Mammary epithelial cell (primary cell): ENCODE measurements at regions of chr22 and their contacts with region 1.

Region 1: GRCh38 chr22:46035742-46036557 is 59.0 kb upstream of the WNT7B start:
- DNase-seq: peak; percentile 97
- H3K4me3 ChIP-seq: peak overlapping the region; percentile 74 to 89 (median 87)
- H3K27ac ChIP-seq: peak overlapping the region; percentile 80
- H3K4me1 ChIP-seq: peaks cover 19% of the 10 kb centered on the region
- H3K27me3 ChIP-seq: no peaks in the 10 kb centered on the region
- CTCF ChIP-seq: no peak

Region 2: DNA sequence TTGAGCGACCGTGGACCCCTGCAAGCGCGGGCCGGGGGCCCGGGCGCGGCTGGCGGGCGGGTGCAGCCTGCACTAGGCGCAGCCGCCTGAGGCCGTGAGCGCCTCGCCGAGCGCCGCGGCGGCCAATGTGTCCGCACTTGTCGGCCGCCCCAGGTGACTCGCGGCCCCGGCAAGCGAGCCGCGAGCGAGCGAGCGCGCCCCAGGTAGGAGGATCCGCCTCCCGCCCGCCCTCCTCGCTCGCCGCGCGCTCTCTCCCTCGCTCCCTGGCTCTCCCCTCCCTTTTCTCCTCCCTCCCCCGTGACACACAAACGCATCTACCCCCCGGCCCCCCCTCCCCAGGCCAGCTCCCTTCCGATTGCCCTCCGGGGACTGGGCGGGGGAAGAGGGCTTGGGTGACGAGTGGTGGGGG is 58.9 kb before region 1 on chr22 and contains the start of gene WNT7B:
- CTCF ChIA-PET with region 1: no interaction called
- dilution Hi-C with region 1: no loop called
- in situ Hi-C with region 1: no loop called
- intact Hi-C with region 1: no loop called
- DNase-seq: peak; percentile 78
- H3K4me3 ChIP-seq: peak within 1 kb of the TSS in 2 of 3 experiments; percentile 36 to 43
- H3K27ac ChIP-seq: no peak within 1 kb of the TSS
- H3K4me1 ChIP-seq: peaks cover 25% of the 10 kb centered on the region
- H3K27me3 ChIP-seq: peaks cover 11% of the 10 kb centered on the region
- CTCF ChIP-seq: no peak
- total RNA-seq, gene WNT7B: 0.31 to 0.50 TPM

Region 3: GRCh38 chr22:46057762-46058420 is 21.9 kb after region 1 on chr22:
- CTCF ChIA-PET with region 1: no interaction called
- dilution Hi-C with region 1: no loop called
- in situ Hi-C with region 1: no loop called
- intact Hi-C with region 1: loop called (anchors 1 kb)
- DNase-seq: peak; percentile 86
- H3K4me3 ChIP-seq: peak overlapping the region; percentile 4 to 72 (median 59)
- H3K27ac ChIP-seq: peak overlapping the region; percentile 87
- H3K4me1 ChIP-seq: peaks cover 66% of the 10 kb centered on the region
- H3K27me3 ChIP-seq: no peaks in the 10 kb centered on the region
- CTCF ChIP-seq: no peak

Region 4: DNA sequence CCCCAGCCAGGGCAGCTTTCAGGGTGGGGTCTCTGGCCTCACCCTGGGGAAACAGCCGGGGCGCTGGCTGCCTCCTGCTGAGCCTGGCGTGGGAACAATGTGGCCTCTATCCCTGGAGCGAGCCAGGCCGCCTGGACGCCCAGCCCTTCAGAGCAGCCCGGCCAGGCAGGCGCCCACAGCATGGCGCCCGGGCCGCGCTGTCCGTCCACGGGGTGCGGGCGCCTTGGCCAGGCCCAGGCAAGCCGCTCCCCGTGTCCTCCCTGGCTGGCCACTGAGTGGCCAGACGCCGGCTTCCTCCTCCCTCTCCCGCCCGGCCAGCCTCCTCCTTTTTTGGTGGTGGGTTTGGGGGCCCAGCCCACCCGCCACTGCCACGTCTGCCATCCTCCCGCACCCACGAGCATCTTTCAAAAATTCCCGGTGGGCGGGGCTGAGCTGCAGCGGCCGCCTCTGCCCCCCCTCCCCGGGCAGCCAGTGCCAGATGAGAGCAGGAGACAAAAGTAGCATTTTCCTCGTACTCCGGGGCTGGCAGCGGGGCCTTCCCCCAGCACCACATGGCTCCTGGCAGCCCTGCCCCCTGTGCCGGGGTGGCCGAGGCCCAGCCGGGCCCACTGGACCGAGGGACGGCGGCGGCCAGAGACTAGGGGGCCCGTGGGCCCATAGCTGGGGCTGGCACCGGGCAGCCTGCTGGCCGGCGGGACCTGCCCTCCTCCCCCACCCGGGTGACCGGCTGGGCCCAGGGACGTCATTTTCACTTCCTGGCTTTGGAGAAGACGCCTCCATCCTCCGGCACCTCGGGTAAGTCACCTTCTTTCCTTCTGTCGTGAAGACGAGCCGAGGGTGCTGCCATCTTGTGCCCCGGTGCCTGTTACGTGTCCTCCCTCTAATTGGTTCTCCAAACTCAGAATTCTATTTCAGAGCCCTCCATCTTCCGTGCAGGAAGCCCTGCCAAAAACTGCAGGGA is 44.2 kb after region 1 on chr22:
- CTCF ChIA-PET with region 1: no interaction called
- dilution Hi-C with region 1: no loop called
- in situ Hi-C with region 1: no loop called
- intact Hi-C with region 1: loop called (anchors 1 kb)
- DNase-seq: peak; percentile 95
- H3K4me3 ChIP-seq: peak overlapping the region; percentile 89 to 95 (median 93)
- H3K27ac ChIP-seq: peak overlapping the region; percentile 94
- H3K4me1 ChIP-seq: peaks cover 61% of the 10 kb centered on the region
- H3K27me3 ChIP-seq: no peaks in the 10 kb centered on the region
- CTCF ChIP-seq: no peak

Region 5: DNA sequence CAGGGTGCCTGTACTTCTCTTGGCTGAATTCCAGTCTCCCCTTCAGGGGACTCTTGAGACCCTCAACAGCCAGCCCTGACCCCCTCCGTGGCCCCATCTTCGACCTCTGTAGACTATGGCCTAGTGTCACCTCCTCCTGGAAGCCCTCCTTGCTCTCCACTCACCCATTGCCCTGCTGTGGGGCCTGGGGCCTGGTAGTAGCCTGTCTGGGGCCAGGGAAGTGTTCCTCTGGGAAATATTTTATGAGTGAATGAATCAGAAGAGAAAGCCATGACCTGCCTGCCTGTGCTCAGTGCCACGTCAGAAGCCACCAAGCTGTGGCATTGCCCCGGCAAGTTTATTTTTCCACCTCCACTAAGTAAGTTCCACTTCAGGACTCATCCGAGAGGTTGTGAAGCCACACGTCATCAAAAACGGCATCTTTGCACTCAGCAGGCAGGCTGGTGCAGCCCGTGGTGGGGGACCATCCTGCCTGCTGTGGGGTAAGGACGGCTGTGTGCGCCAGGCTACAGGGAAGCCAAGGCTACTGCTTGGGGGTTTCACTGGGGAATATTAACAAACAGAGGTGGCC is 54.8 kb after region 1 on chr22:
- CTCF ChIA-PET with region 1: no interaction called
- dilution Hi-C with region 1: no loop called
- in situ Hi-C with region 1: no loop called
- intact Hi-C with region 1: no loop called
- DNase-seq: peak; percentile 86
- H3K4me3 ChIP-seq: no peak overlapping the region
- H3K27ac ChIP-seq: peak overlapping the region; percentile 79
- H3K4me1 ChIP-seq: peaks cover 83% of the 10 kb centered on the region
- H3K27me3 ChIP-seq: no peaks in the 10 kb centered on the region
- CTCF ChIP-seq: no peak

Region 6: GRCh38 chr22:46116491-46116958 is 80.6 kb after region 1 on chr22:
- CTCF ChIA-PET with region 1: interaction called, 19 read pairs
- dilution Hi-C with region 1: no loop called
- in situ Hi-C with region 1: no loop called
- intact Hi-C with region 1: loop called (anchors 2 kb)
- DNase-seq: peak; percentile 63
- H3K4me3 ChIP-seq: no peak overlapping the region
- H3K27ac ChIP-seq: no peak overlapping the region
- H3K4me1 ChIP-seq: peaks cover 30% of the 10 kb centered on the region
- H3K27me3 ChIP-seq: no peaks in the 10 kb centered on the region
- CTCF ChIP-seq: peak; percentile 29 to 83

Region 7: DNA sequence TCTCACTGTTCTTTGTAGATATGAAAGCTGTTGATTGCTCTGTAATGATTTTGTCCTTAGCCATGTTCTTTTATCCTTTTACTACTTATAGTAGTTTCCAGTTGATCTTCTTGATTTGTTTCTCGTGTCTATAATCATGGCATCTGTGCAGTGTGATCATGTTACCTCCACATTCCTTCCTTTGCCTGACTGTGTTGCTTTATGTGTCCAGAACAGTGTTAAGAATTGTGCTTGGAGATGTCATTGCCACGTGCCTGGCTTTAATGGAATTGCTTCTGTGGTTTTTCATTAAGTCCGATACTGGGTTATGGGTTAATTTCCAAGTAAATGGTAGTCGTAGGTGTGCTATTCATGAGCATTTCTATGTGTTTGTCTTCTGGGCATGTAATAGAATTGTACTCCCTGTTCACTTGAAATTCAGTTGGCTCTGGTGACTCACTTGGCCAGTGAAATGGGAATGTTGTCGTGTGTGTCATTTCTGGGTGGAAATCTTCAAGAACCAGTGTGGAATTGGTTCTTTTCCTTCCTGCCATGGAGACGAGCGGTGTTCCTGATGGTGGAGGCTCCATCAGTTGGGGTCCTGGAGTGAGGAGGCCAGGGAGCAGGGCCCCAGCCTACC is 267.5 kb after region 1 on chr22:
- CTCF ChIA-PET with region 1: no interaction called
- dilution Hi-C with region 1: no loop called
- in situ Hi-C with region 1: no loop called
- intact Hi-C with region 1: no loop called
- DNase-seq: peak; percentile 8
- H3K4me3 ChIP-seq: no peak overlapping the region
- H3K27ac ChIP-seq: no peak overlapping the region
- H3K4me1 ChIP-seq: peaks cover 15% of the 10 kb centered on the region
- H3K27me3 ChIP-seq: no peaks in the 10 kb centered on the region
- CTCF ChIP-seq: no peak